MCF 10A (cell line): ENCODE measurements at regions of chr5 and their contacts with region 1.

Region 1: GRCh38 chr5:157778121-157778805 is 34.8 kb downstream of the LSM11 start:
- DNase-seq: peak; percentile 73
- H3K4me3 Mint-ChIP-seq: no peak overlapping the region
- H3K27ac Mint-ChIP-seq: no peak overlapping the region
- H3K4me1 Mint-ChIP-seq: no peaks in the 10 kb centered on the region
- H3K27me3 Mint-ChIP-seq: no peaks in the 10 kb centered on the region
- CTCF ChIP-seq: no peak

Region 2: GRCh38 chr5:157735991-157736390 is 42.3 kb before region 1 on chr5:
- CTCF ChIA-PET with region 1: no interaction called
- POLR2A ChIA-PET with region 1: no interaction called
- intact Hi-C with region 1: no loop called
- DNase-seq: no peak
- H3K4me3 Mint-ChIP-seq: no peak overlapping the region
- H3K27ac Mint-ChIP-seq: no peak overlapping the region
- H3K4me1 Mint-ChIP-seq: peaks cover 14% of the 10 kb centered on the region
- H3K27me3 Mint-ChIP-seq: no peaks in the 10 kb centered on the region
- CTCF ChIP-seq: no peak

Region 3: GRCh38 chr5:157793301-157793700 is 15.0 kb after region 1 on chr5:
- CTCF ChIA-PET with region 1: no interaction called
- POLR2A ChIA-PET with region 1: interaction called, 12 read pairs
- intact Hi-C with region 1: no loop called
- DNase-seq: no peak
- H3K4me3 Mint-ChIP-seq: no peak overlapping the region
- H3K27ac Mint-ChIP-seq: no peak overlapping the region
- H3K4me1 Mint-ChIP-seq: no peaks in the 10 kb centered on the region
- H3K27me3 Mint-ChIP-seq: no peaks in the 10 kb centered on the region
- CTCF ChIP-seq: no peak

Region 4: GRCh38 chr5:158573829-158574228 is 795.6 kb after region 1 on chr5:
- CTCF ChIA-PET with region 1: no interaction called
- POLR2A ChIA-PET with region 1: no interaction called
- intact Hi-C with region 1: no loop called
- DNase-seq: no peak
- H3K4me3 Mint-ChIP-seq: no peak overlapping the region
- H3K27ac Mint-ChIP-seq: no peak overlapping the region
- H3K4me1 Mint-ChIP-seq: no peaks in the 10 kb centered on the region
- H3K27me3 Mint-ChIP-seq: no peaks in the 10 kb centered on the region
- CTCF ChIP-seq: no peak